Posterior cingulate gyrus (tissue), 11 donors: ENCODE measurements at regions of chr1 and their contacts with region 1.

Region 1: DNA sequence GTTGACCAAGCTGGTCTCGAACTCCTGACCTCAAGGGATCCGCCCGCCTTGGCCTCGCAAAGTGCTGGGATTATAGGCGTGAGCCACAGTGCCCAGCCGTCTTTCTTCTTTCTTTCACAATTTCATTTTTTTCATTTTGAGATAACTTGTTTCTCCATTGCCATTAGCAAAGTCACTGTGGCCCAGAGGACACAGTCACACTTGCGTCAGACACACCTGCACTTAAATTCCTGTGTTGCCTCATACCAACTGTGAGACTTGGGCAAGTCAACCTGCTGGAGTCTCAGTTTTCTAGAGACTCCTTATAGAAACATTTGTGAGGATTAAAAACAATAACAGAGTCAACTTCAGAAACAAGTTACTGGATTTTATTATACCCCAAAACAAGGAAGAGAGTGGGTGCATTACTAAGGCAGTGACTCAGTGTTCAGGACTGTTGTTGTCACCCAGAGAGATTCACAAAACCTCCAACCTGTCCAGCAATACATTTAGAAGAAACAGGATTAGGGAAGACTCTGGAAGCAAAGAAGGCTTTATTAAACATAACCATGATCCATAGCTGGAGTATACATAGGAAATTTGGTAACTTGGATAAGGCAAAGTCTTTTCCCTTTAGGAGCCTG is 2.6 kb downstream of the TEDDM1 start:
- DNase-seq: no peak

Region 2: GRCh38 chr1:182084487-182085316 is 313.2 kb before region 1 on chr1:
- intact Hi-C with region 1: loop called (anchors 1 kb)
- DNase-seq: peak; percentile 77 to 98 (median 92)